Testis (tissue), 5 donors: ENCODE measurements at regions of chr6 and their contacts with region 1.

Region 1: GRCh38 chr6:156719720-156720563 is 57.2 kb upstream of the ARID1B start:
- DNase-seq: peak; percentile 94
- H3K4me3 ChIP-seq: peak overlapping the region; percentile 31 to 49
- H3K27ac ChIP-seq: peak overlapping the region; percentile 93 to 96
- H3K4me1 ChIP-seq: peaks cover 35% of the 10 kb centered on the region
- H3K27me3 ChIP-seq: no peaks in the 10 kb centered on the region
- CTCF ChIP-seq: no peak
- POLR2A ChIP-seq: no peak

Region 2: GRCh38 chr6:156686995-156687788 is 32.8 kb before region 1 on chr6:
- intact Hi-C with region 1: loop called (anchors 2 kb)
- DNase-seq: peak; percentile 86
- H3K4me3 ChIP-seq: peak overlapping the region; percentile 74 to 81
- H3K27ac ChIP-seq: peak overlapping the region; percentile 97 to 99
- H3K4me1 ChIP-seq: peaks cover 4% of the 10 kb centered on the region
- H3K27me3 ChIP-seq: no peaks in the 10 kb centered on the region
- CTCF ChIP-seq: peak in 1 of 3 experiments; percentile 6
- POLR2A ChIP-seq: peak; percentile 22

Region 3: GRCh38 chr6:156976216-156977127 is 256.5 kb after region 1 on chr6:
- intact Hi-C with region 1: no loop called
- DNase-seq: no peak
- H3K4me3 ChIP-seq: no peak overlapping the region
- H3K27ac ChIP-seq: no peak overlapping the region
- H3K4me1 ChIP-seq: no peaks in the 10 kb centered on the region
- H3K27me3 ChIP-seq: no peaks in the 10 kb centered on the region
- CTCF ChIP-seq: no peak
- POLR2A ChIP-seq: no peak